ENCODE measurements at regions of chr1 and their contacts with region 1.

Region 1: GRCh38 chr1:156751758-156752757 is 583 bp upstream of the HDGF start:
- DNase-seq: peak; percentile 87 to 95
- H3K4me3 ChIP-seq: peak overlapping the region; percentile 95
- H3K27ac ChIP-seq: peak overlapping the region; percentile 59
- H3K4me1 ChIP-seq: peaks cover 21% of the 10 kb centered on the region
- H3K27me3 ChIP-seq: no peaks in the 10 kb centered on the region
- CTCF ChIP-seq: no peak

Region 2: GRCh38 chr1:156740679-156741612 is 11.1 kb before region 1 on chr1 and contains the start of gene MRPL24:
- CTCF ChIA-PET with region 1: no interaction called
- POLR2A ChIA-PET with region 1: interaction called, 3 read pairs
- intact Hi-C with region 1: loop called (anchors 1 kb)
- DNase-seq: peak; percentile 97 to 99
- H3K4me3 ChIP-seq: peak within 1 kb of the TSS; percentile 79
- H3K27ac ChIP-seq: peak within 1 kb of the TSS; percentile 60
- H3K4me1 ChIP-seq: peaks cover 17% of the 10 kb centered on the region
- H3K27me3 ChIP-seq: no peaks in the 10 kb centered on the region
- CTCF ChIP-seq: no peak
- total RNA-seq, gene MRPL24: 74.1 and 85.3 TPM in 2 replicates

Region 3: GRCh38 chr1:156797212-156797871 is 45.3 kb after region 1 on chr1:
- CTCF ChIA-PET with region 1: no interaction called
- POLR2A ChIA-PET with region 1: no interaction called
- intact Hi-C with region 1: no loop called
- DNase-seq: peak; percentile 41 to 54
- H3K4me3 ChIP-seq: no peak overlapping the region
- H3K27ac ChIP-seq: no peak overlapping the region
- H3K4me1 ChIP-seq: no peaks in the 10 kb centered on the region
- H3K27me3 ChIP-seq: no peaks in the 10 kb centered on the region
- CTCF ChIP-seq: peak; percentile 90

Measured in PC-9 (cell line).